ENCODE measurements at regions of chr10 and their contacts with region 1.

Region 1: GRCh38 chr10:6300106-6300783 is 97.5 kb downstream of the PFKFB3 start:
- DNase-seq: peak; percentile 89
- H3K4me3 ChIP-seq: peak overlapping the region; percentile 54
- H3K27ac ChIP-seq: peak overlapping the region; percentile 93
- H3K4me1 ChIP-seq: peaks cover 87% of the 10 kb centered on the region
- CTCF ChIP-seq: no peak

Region 2: GRCh38 chr10:6314620-6315205 is 14.5 kb after region 1 on chr10:
- CTCF ChIA-PET with region 1: interaction called, 5 read pairs
- POLR2A ChIA-PET with region 1: interaction called, 25 read pairs
- intact Hi-C with region 1: no loop called
- DNase-seq: no peak
- H3K4me3 ChIP-seq: no peak overlapping the region
- H3K27ac ChIP-seq: no peak overlapping the region
- H3K4me1 ChIP-seq: peaks cover 76% of the 10 kb centered on the region
- CTCF ChIP-seq: no peak

Region 3: GRCh38 chr10:6320320-6321010 is 20.2 kb after region 1 on chr10:
- CTCF ChIA-PET with region 1: interaction called, 5 read pairs
- POLR2A ChIA-PET with region 1: interaction called, 16 read pairs
- intact Hi-C with region 1: loop called (anchors 1 kb)
- DNase-seq: peak; percentile 96
- H3K4me3 ChIP-seq: peak overlapping the region; percentile 24
- H3K27ac ChIP-seq: peak overlapping the region; percentile 97
- H3K4me1 ChIP-seq: peaks cover 79% of the 10 kb centered on the region
- CTCF ChIP-seq: no peak

Measured in OCI-LY7 (cell line).